CD8-positive, alpha-beta T cell (primary cell): ENCODE measurements at regions of chr19 and their contacts with region 1.

Region 1: GRCh38 chr19:18636183-18636968 is 452 bp upstream of the KLHL26 start:
- DNase-seq: peak; percentile 97 to 100 (median 99)
- ATAC-seq: peak; percentile 87
- H3K4me3 ChIP-seq: peak overlapping the region; percentile 64 to 79
- H3K4me3 Mint-ChIP-seq: peak overlapping the region; percentile 89
- H3K27ac ChIP-seq: peak overlapping the region; percentile 14 to 78
- H3K27ac Mint-ChIP-seq: peak overlapping the region; percentile 82
- H3K4me1 ChIP-seq: peaks cover 22% of the 10 kb centered on the region
- H3K4me1 Mint-ChIP-seq: peaks cover 36% of the 10 kb centered on the region
- H3K27me3 ChIP-seq: no peaks in the 10 kb centered on the region
- H3K27me3 Mint-ChIP-seq: peaks cover 6% of the 10 kb centered on the region
- CTCF ChIP-seq: no peak

Region 2: GRCh38 chr19:18152444-18152816 is 483.9 kb before region 1 on chr19:
- CTCF ChIA-PET with region 1: no interaction called
- POLR2A ChIA-PET with region 1: no interaction called
- intact Hi-C with region 1: loop called in 1 of 2 experiments (anchors 2 kb)
- DNase-seq: peak; percentile 94 to 99 (median 99)
- ATAC-seq: peak; percentile 65
- H3K4me3 ChIP-seq: peak overlapping the region; percentile 66 to 71
- H3K4me3 Mint-ChIP-seq: peak overlapping the region; percentile 84
- H3K27ac ChIP-seq: peak overlapping the region; percentile 66 to 87
- H3K27ac Mint-ChIP-seq: peak overlapping the region; percentile 95
- H3K4me1 ChIP-seq: peaks cover 17% of the 10 kb centered on the region
- H3K4me1 Mint-ChIP-seq: peaks cover 23% of the 10 kb centered on the region
- H3K27me3 ChIP-seq: no peaks in the 10 kb centered on the region
- H3K27me3 Mint-ChIP-seq: no peaks in the 10 kb centered on the region
- CTCF ChIP-seq: peak; percentile 87

Region 3: GRCh38 chr19:18488838-18489626 is 147.3 kb before region 1 on chr19:
- CTCF ChIA-PET with region 1: no interaction called
- POLR2A ChIA-PET with region 1: no interaction called
- intact Hi-C with region 1: no loop called
- DNase-seq: peak in 1 of 9 experiments; percentile 41
- ATAC-seq: no peak
- H3K4me3 ChIP-seq: no peak overlapping the region
- H3K4me3 Mint-ChIP-seq: no peak overlapping the region
- H3K27ac ChIP-seq: no peak overlapping the region
- H3K27ac Mint-ChIP-seq: peak overlapping the region; percentile 37
- H3K4me1 ChIP-seq: peaks cover 41% of the 10 kb centered on the region
- H3K4me1 Mint-ChIP-seq: peaks cover 67% of the 10 kb centered on the region
- H3K27me3 ChIP-seq: no peaks in the 10 kb centered on the region
- H3K27me3 Mint-ChIP-seq: no peaks in the 10 kb centered on the region
- CTCF ChIP-seq: no peak

Region 4: DNA sequence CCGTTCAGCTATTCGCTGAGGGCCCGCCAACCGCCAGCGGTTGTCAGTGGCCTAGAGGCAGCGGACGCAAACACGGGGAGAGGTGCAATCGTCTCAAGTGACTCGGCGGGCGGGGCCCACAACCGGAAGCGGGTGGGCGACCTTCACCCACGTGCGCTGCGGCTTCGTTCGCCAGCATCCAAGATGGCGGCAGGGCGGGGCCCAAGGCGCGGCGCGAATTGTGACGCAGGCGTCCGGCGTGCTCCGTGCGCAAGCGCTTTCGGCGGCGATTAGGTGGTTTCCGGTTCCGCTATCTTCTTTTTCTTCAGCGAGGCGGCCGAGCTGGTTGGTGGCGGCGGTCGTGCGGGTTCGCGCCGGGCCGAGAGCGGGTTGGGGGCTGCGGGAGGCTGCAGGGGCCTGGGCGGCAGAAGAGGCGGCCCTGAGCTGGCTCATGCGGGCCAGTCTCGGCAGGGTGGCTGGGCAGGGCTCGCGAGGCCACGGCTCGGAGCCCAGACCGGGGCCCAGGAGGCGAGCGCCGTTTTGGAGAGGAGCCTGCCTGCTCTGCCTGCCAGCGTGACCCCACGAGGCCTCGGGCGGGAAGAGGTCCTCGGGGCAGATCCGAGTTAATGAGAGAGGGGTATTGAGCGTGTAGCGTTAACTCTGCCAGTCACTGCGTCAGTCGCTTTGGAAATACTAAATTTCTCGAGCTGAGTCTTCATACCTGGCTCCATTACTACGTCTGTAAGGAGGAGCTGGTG is 64.6 kb before region 1 on chr19 and contains the start of gene UBA52:
- CTCF ChIA-PET with region 1: no interaction called
- POLR2A ChIA-PET with region 1: no interaction called
- intact Hi-C with region 1: loop called (anchors 1 kb)
- DNase-seq: peak; percentile 98 to 100 (median 99)
- ATAC-seq: peak; percentile 91
- H3K4me3 ChIP-seq: peak within 1 kb of the TSS; percentile 94 to 97
- H3K4me3 Mint-ChIP-seq: peak within 1 kb of the TSS; percentile 95
- H3K27ac ChIP-seq: peak within 1 kb of the TSS; percentile 95 to 96
- H3K27ac Mint-ChIP-seq: peak within 1 kb of the TSS; percentile 97
- H3K4me1 ChIP-seq: peaks cover 16% of the 10 kb centered on the region
- H3K4me1 Mint-ChIP-seq: peaks cover 19% of the 10 kb centered on the region
- H3K27me3 ChIP-seq: no peaks in the 10 kb centered on the region
- H3K27me3 Mint-ChIP-seq: no peaks in the 10 kb centered on the region
- CTCF ChIP-seq: no peak
- total RNA-seq, gene UBA52: 2,140 to 2,193 TPM

Region 5: DNA sequence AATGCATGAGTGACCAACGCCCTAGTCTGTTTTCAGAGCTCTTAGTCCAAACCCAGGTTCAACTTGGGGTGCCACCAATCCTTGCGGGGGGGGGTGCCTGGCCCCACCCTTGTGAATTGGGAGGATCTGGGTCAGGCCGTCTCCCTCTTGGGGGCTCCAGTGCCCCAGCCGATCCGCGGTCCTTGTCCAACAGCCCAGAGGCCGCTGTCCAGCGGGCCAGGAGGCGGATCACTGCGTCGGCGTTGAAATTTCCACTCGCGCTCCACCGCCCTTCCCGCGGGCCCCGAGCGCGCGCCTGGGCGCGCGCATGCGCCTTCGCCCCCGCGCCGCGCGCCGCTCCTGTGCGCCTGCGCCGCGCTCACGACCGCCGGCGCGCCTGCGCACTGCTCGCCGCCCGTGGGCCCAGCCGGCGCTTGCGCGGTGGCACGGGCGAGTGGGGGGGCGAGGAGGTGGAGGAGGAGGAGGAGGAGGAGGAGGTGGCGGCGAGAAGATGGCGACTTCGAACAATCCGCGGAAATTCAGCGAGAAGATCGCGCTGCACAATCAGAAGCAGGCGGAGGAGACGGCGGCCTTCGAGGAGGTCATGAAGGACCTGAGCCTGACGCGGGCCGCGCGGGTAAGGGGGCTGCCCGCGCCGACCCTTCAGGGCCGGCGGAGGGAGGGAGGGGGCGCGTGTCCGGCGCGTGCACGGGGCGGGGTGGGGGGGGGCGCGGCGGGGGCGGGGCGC is 47.0 kb after region 1 on chr19 and contains the start of gene CRTC1:
- CTCF ChIA-PET with region 1: no interaction called
- POLR2A ChIA-PET with region 1: no interaction called
- intact Hi-C with region 1: loop called (anchors 1 to 2 kb)
- DNase-seq: peak; percentile 90 to 97 (median 95)
- ATAC-seq: peak; percentile 90
- H3K4me3 ChIP-seq: peak within 1 kb of the TSS; percentile 63 to 91
- H3K4me3 Mint-ChIP-seq: peak within 1 kb of the TSS; percentile 87
- H3K27ac ChIP-seq: peak within 1 kb of the TSS; percentile 65 to 67
- H3K27ac Mint-ChIP-seq: peak within 1 kb of the TSS; percentile 82
- H3K4me1 ChIP-seq: peaks cover 20% of the 10 kb centered on the region
- H3K4me1 Mint-ChIP-seq: peaks cover 33% of the 10 kb centered on the region
- H3K27me3 ChIP-seq: no peaks in the 10 kb centered on the region
- H3K27me3 Mint-ChIP-seq: no peaks in the 10 kb centered on the region
- CTCF ChIP-seq: no peak
- total RNA-seq, gene CRTC1: 7.1 to 7.5 TPM

Region 6: GRCh38 chr19:18919086-18919899 is 282.9 kb after region 1 on chr19 and contains the starts of genes COPE and DDX49:
- CTCF ChIA-PET with region 1: no interaction called
- POLR2A ChIA-PET with region 1: interaction called, 3 read pairs
- intact Hi-C with region 1: loop called (anchors 1 kb)
- DNase-seq: peak; percentile 92 to 100 (median 98)
- ATAC-seq: peak; percentile 93
- H3K4me3 ChIP-seq: peak within 1 kb of the TSS; percentile 92 to 94
- H3K4me3 Mint-ChIP-seq: peak within 1 kb of the TSS; percentile 93
- H3K27ac ChIP-seq: peak within 1 kb of the TSS; percentile 96 to 97
- H3K27ac Mint-ChIP-seq: peak within 1 kb of the TSS; percentile 94
- H3K4me1 ChIP-seq: peaks cover 30% of the 10 kb centered on the region
- H3K4me1 Mint-ChIP-seq: peaks cover 43% of the 10 kb centered on the region
- H3K27me3 ChIP-seq: no peaks in the 10 kb centered on the region
- H3K27me3 Mint-ChIP-seq: no peaks in the 10 kb centered on the region
- CTCF ChIP-seq: no peak
- total RNA-seq, gene COPE: 207 to 211 TPM
- total RNA-seq, gene DDX49: 67.1 to 72.8 TPM

Region 7: GRCh38 chr19:19138169-19138981 is 502.0 kb after region 1 on chr19 and contains the start of gene TMEM161A:
- CTCF ChIA-PET with region 1: no interaction called
- POLR2A ChIA-PET with region 1: no interaction called
- intact Hi-C with region 1: loop called in 1 of 2 experiments (anchors 5 kb)
- DNase-seq: peak; percentile 88 to 98 (median 96)
- ATAC-seq: peak; percentile 99
- H3K4me3 ChIP-seq: peak within 1 kb of the TSS; percentile 78 to 95
- H3K4me3 Mint-ChIP-seq: peak within 1 kb of the TSS; percentile 95
- H3K27ac ChIP-seq: peak within 1 kb of the TSS; percentile 64 to 77
- H3K27ac Mint-ChIP-seq: peak within 1 kb of the TSS; percentile 92
- H3K4me1 ChIP-seq: peaks cover 14% of the 10 kb centered on the region
- H3K4me1 Mint-ChIP-seq: peaks cover 34% of the 10 kb centered on the region
- H3K27me3 ChIP-seq: no peaks in the 10 kb centered on the region
- H3K27me3 Mint-ChIP-seq: no peaks in the 10 kb centered on the region
- CTCF ChIP-seq: no peak
- total RNA-seq, gene TMEM161A: 9.4 to 9.9 TPM